Upper lobe of right lung (tissue), 1 donor: ENCODE measurements at regions of chr6 and their contacts with region 1.

Region 1: GRCh38 chr6:31834434-31835198 is 7.1 kb downstream of the HSPA1B start:
- DNase-seq: peak; percentile 94
- ATAC-seq: peak; percentile 91
- H3K4me3 ChIP-seq: peak overlapping the region; percentile 86
- H3K27ac ChIP-seq: peak overlapping the region; percentile 93
- H3K4me1 ChIP-seq: peaks cover 49% of the 10 kb centered on the region
- H3K27me3 ChIP-seq: no peaks in the 10 kb centered on the region
- CTCF ChIP-seq: no peak

Region 2: DNA sequence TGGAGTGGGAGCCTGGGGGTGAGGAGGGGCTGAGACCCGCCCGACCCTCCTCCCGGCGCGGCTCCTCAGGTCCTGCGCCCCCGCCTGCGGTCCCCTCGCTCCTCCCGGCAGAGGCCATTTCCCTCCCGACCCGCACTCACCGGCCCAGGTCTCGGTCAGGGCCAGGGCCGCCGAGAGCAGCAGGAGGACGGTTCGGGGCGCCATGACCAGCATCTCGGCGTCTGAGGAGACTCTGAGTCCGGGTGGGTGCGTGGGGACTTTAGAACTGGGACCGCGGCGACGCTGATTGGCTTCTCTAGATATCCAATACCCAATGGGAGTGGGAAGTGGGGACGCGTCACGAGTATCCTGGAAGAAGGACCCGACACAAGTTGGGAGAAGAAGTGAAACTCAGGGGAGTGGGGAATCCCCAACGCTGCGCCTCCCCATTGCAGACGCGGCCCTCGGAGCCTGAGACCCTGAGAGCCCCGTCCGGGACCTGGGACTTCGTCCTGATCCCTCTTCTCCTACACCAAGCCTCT is 477.6 kb before region 1 on chr6 and contains the start of gene HLA-B:
- intact Hi-C with region 1: no loop called
- DNase-seq: peak; percentile 82
- ATAC-seq: peak; percentile 95
- H3K4me3 ChIP-seq: peak within 1 kb of the TSS; percentile 67
- H3K27ac ChIP-seq: peak within 1 kb of the TSS; percentile 72
- H3K4me1 ChIP-seq: peaks cover 9% of the 10 kb centered on the region
- H3K27me3 ChIP-seq: no peaks in the 10 kb centered on the region
- CTCF ChIP-seq: no peak
- total RNA-seq, gene HLA-B: 2,632 TPM

Region 3: GRCh38 chr6:31689249-31690110 is 145.1 kb before region 1 on chr6:
- intact Hi-C with region 1: loop called (anchors 10 kb)
- DNase-seq: no peak
- ATAC-seq: no peak
- H3K4me3 ChIP-seq: no peak overlapping the region
- H3K27ac ChIP-seq: no peak overlapping the region
- H3K4me1 ChIP-seq: no peaks in the 10 kb centered on the region
- H3K27me3 ChIP-seq: no peaks in the 10 kb centered on the region
- CTCF ChIP-seq: peak; percentile 25

Region 4: GRCh38 chr6:31711233-31711632 is 123.4 kb before region 1 on chr6:
- intact Hi-C with region 1: no loop called
- DNase-seq: no peak
- ATAC-seq: peak; percentile 78
- H3K4me3 ChIP-seq: peak overlapping the region; percentile 3
- H3K27ac ChIP-seq: no peak overlapping the region
- H3K4me1 ChIP-seq: no peaks in the 10 kb centered on the region
- H3K27me3 ChIP-seq: no peaks in the 10 kb centered on the region
- CTCF ChIP-seq: no peak

Region 5: DNA sequence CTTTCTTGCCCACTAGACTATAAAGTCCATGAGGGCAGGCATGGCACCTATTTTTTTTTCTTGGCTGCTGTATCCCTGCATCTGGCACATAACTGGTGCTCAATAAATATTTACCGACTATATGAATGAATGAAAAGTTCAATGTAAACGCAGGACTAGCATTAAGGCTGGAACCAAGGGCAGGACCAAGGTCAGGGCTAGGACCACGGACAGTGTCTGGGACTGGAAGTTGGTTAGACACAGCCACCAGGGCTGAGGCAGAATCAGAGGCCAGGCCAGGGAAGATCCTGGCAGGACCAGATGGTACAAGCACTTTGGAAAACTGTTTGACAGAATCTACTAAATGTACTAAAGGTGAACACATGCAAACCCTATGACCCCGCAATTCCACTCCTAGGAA is 270.8 kb after region 1 on chr6:
- intact Hi-C with region 1: no loop called
- DNase-seq: no peak
- ATAC-seq: no peak
- H3K4me3 ChIP-seq: no peak overlapping the region
- H3K27ac ChIP-seq: no peak overlapping the region
- H3K4me1 ChIP-seq: peaks cover 24% of the 10 kb centered on the region
- H3K27me3 ChIP-seq: no peaks in the 10 kb centered on the region
- CTCF ChIP-seq: no peak